ENCODE measurements at regions of chr2 and their contacts with region 1.

Region 1: DNA sequence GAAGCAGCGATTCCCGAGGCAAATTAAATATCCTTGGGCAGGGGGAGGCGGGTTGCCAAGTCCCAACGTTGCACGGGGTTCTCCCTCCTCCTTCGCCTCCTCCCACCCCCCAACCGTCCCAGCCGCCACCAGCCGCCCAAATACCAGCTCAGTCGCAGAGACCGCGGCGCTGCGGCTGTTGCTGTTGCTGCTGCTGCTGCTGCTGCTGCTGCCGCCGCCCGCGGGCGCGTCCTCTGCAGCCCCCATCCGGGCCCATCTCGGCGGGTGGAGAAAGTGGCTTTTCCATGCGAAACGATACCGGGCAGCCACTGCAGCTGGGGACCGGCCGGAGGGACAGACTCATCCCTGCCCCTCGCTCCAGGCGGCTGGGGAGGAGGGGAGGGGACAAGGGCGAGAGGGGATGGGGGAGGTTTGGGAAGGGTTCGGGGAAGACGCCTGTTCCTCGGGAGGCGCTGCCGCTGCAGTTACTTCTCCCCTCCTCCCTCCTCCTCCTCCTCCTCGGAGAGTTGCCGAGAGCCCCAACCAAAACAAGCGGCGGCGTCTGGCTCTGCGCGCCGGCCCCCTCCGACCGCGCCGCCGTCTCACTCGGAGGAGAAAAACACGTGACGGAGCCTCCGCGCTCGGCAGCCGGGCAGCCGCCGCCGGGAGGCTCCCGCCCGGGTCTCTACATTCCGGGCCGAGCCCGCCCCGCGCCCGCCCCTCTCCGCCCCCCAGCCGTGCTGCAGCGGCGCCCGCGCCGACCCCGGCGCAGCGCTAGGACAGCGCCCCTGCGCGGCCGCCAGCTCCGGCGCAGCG is at the start of gene IRS1:
- DNase-seq: peak; percentile 91
- H3K4me3 ChIP-seq: peak within 1 kb of the TSS; percentile 61 to 91 (median 78)
- H3K27ac ChIP-seq: peak within 1 kb of the TSS; percentile 89 to 97 (median 96)
- H3K4me1 ChIP-seq: peaks cover 0 to 58% (median 40%) of the 10 kb centered on the region in 4 donors
- H3K27me3 ChIP-seq: no peaks in the 10 kb centered on the region
- CTCF ChIP-seq: peak in 1 of 4 experiments; percentile 49
- EP300 ChIP-seq: no peak
- POLR2A ChIP-seq: peak; percentile 6 to 18
- total RNA-seq, gene IRS1: 18.5 to 29.1 (median 23.7) TPM

Region 2: DNA sequence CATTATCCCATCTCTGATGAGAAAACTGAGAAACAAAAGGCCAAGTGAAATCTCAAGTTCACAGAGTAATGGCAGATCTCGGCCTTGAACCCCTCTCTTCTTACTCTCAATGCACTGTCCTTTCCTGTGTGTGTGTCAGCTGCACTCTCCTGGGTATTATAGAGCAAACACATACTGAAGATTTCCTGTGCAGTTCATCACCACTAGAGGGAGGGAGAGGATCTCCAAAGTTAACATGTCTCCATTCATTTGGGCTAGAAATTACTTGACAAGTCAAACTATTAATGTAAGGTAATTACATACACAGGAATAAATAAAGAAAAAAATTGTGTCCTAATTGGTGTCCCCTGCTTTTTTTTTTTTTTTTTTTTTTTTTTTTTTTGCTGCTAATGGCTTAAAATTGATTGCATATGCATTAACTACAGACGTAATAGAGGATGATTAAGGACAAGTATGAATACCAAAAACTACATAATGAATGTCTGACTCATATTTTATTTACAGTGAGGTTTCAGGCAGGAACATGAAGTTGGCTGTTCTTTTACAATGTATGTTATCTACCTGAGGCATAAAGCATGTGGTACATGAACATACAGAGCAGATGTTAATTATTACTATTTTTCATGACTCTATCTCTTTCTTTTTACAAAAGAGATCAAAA is 1130.6 kb before region 1 on chr2:
- intact Hi-C with region 1: loop called (anchors 2 kb)
- DNase-seq: no peak
- H3K4me3 ChIP-seq: no peak overlapping the region
- H3K27ac ChIP-seq: no peak overlapping the region
- H3K4me1 ChIP-seq: peaks cover 0 to 21% (median 10%) of the 10 kb centered on the region in 4 donors
- H3K27me3 ChIP-seq: no peaks in the 10 kb centered on the region
- CTCF ChIP-seq: peak; percentile 35 to 70 (median 62)
- EP300 ChIP-seq: no peak
- POLR2A ChIP-seq: no peak

Region 3: DNA sequence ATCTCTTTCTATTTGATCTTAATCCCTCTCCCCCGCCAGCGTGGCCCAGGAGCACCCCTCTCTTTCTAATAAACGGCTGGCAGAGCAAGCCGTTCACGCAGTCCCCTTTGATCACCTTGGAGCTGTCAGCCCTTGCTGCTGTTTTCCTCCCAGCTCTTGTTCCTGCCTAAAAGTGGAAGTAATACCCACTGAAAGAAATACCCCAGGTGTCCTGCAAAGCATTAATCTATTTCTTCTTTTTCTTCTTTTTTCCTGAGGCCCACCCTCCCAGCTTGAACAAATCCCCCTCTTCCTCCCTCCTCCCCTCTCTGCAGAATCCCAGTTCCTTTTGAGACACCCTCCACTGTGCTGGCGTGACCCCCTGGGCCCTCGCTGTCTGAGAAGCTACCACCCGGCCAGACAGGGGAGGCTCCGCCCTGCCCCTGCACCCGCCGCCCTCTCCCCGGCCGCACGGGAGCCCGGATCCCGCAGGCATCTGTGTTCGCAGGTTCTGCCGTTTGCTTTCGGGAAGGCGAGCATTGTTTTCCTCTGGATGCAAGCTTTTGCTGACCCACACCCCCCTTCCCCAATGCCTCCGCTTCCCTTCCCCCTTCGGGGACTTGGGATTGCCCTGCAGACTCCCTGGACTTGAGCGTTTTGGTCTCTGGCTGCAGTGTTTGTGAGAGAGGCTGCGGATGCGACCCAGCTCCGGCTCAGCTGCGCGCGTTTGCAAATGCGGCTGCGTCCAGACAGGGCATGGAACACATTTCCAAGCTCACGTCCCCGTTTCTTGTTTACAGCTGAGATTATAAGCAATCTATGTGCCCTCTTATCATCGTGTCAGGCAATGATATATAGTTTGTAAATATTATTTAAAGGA is 768.4 kb before region 1 on chr2:
- intact Hi-C with region 1: loop called (anchors 5 kb)
- DNase-seq: peak; percentile 79
- H3K4me3 ChIP-seq: peak overlapping the region; percentile 39 to 55 (median 52)
- H3K27ac ChIP-seq: peak overlapping the region; percentile 45 to 75 (median 56)
- H3K4me1 ChIP-seq: peaks cover 0 to 19% (median 10%) of the 10 kb centered on the region in 4 donors
- H3K27me3 ChIP-seq: no peaks in the 10 kb centered on the region
- CTCF ChIP-seq: no peak
- EP300 ChIP-seq: no peak
- POLR2A ChIP-seq: no peak

Region 4: GRCh38 chr2:226423498-226423960 is 375.8 kb before region 1 on chr2:
- intact Hi-C with region 1: loop called (anchors 5 kb)
- DNase-seq: peak; percentile 69
- H3K4me3 ChIP-seq: peak overlapping the region in 3 of 4 donors; percentile 2 to 16 (median 12)
- H3K27ac ChIP-seq: peak overlapping the region in 3 of 4 donors; percentile 64 to 74 (median 67)
- H3K4me1 ChIP-seq: peaks cover 0 to 17% (median 16%) of the 10 kb centered on the region in 4 donors
- H3K27me3 ChIP-seq: no peaks in the 10 kb centered on the region
- CTCF ChIP-seq: no peak
- EP300 ChIP-seq: peak in 1 of 4 donors; percentile 55
- POLR2A ChIP-seq: no peak

Region 5: DNA sequence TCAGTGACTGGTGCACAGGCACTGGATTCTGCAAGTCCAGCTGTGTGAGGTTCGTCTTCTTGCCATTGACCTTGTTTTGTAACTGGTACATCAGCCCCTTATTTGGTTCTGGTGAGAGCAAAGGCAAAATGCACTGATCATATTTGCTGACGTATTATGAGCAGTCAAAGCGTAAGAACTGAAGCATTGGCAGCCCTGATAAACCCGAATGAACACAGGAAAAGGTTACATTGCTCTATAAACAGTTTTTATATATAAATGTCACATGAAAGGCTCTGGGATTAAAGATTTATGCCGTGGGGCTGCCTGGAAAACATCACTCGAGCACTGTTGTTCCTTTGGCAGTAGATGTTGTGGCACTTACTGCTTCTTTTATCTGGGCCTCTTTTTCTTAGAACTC is 167.7 kb before region 1 on chr2:
- intact Hi-C with region 1: loop called (anchors 1 kb)
- DNase-seq: peak; percentile 90
- H3K4me3 ChIP-seq: no peak overlapping the region
- H3K27ac ChIP-seq: peak overlapping the region; percentile 39 to 84 (median 82)
- H3K4me1 ChIP-seq: peaks cover 0 to 29% (median 22%) of the 10 kb centered on the region in 4 donors
- H3K27me3 ChIP-seq: no peaks in the 10 kb centered on the region
- CTCF ChIP-seq: no peak
- EP300 ChIP-seq: peak; percentile 98 to 100 (median 98)
- POLR2A ChIP-seq: no peak

Region 6: DNA sequence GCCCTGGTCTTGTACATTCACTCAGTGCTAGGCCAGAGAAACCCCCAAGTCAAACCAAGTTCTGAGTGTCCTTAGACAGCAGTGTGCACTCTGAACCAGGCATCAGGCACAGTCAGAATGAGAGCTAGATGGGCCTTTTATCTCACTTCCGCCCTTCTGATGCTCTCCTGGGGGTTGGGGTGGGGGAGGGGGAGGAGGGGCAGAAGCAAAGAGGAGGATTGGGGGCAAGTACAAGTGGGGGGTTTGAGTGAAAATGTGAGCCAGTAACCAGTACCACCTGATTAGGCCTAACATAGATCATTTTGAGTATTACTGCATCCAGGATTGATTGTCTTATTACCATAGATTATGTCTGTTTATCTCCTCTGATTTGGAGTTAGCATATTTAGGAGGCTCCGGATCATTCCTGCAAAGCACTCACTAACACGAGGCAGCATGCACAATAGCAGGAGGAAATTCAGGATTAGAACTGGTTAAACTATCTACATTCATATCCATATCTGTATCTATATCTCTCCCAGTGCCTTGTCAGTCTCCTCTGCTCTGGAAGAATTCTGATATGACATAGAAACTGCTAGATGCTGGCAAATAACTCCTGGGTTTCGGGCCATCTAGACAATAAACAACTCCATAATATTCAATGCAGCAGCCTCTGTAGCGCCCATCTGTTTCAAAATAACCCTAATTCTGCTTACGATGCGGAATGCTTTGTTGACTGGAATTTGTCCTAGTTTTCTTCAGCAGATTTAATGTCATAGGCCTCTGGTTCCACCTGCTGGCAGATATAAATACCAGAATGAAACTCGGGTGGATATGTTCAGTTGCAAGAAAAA is 185.6 kb after region 1 on chr2:
- intact Hi-C with region 1: loop called (anchors 2 kb)
- DNase-seq: no peak
- H3K4me3 ChIP-seq: no peak overlapping the region
- H3K27ac ChIP-seq: peak overlapping the region in 1 of 4 donors; percentile 52
- H3K4me1 ChIP-seq: peaks cover 0 to 11% (median 4%) of the 10 kb centered on the region in 4 donors
- H3K27me3 ChIP-seq: no peaks in the 10 kb centered on the region
- CTCF ChIP-seq: peak; percentile 46 to 78 (median 65)
- EP300 ChIP-seq: no peak
- POLR2A ChIP-seq: no peak

Region 7: GRCh38 chr2:227010433-227010832 is 211.1 kb after region 1 on chr2:
- intact Hi-C with region 1: no loop called
- DNase-seq: no peak
- H3K4me3 ChIP-seq: no peak overlapping the region
- H3K27ac ChIP-seq: no peak overlapping the region
- H3K4me1 ChIP-seq: peaks cover 0 to 5% (median 0%) of the 10 kb centered on the region in 4 donors
- H3K27me3 ChIP-seq: no peaks in the 10 kb centered on the region
- CTCF ChIP-seq: no peak
- EP300 ChIP-seq: no peak
- POLR2A ChIP-seq: no peak